Activated CD4-positive, alpha-beta T cell treated with anti-CD3 and anti-CD28 coated beads, Interleukin-2, amount 10 ng/mL, durations not matched to agents 24 days and 14 days (primary cell): ENCODE measurements at regions of chr4 and their contacts with region 1.

Region 1: GRCh38 chr4:25330905-25331808 is 18.6 kb downstream of the ZCCHC4 start:
- DNase-seq: peak; percentile 71
- H3K4me3 Mint-ChIP-seq: peak overlapping the region; percentile 84
- H3K27ac Mint-ChIP-seq: peak overlapping the region; percentile 92
- H3K4me1 Mint-ChIP-seq: peaks cover 17% of the 10 kb centered on the region
- H3K27me3 Mint-ChIP-seq: no peaks in the 10 kb centered on the region

Region 2: DNA sequence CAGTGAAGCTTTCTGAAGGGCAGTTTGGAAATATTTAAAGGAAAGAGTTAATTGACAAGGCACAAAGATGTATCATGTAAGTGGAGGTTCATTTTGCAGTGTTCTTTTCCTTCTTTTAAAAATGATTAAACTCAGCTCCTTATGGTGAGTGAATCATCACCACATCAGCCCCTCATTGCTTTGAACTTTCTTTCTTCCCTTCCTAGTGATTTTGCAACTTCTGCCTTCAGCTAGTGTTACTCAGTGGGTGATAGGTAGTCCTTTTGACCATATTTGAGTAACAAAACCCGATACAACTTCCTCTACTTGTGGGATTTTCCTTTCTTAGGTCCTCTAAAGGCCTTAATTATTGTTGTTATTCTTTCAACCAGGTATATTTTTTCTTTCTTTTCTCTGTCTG is 10.4 kb before region 1 on chr4:
- intact Hi-C with region 1: loop called (anchors 1 kb)
- DNase-seq: no peak
- H3K4me3 Mint-ChIP-seq: peak overlapping the region; percentile 28
- H3K27ac Mint-ChIP-seq: peak overlapping the region; percentile 81
- H3K4me1 Mint-ChIP-seq: peaks cover 23% of the 10 kb centered on the region
- H3K27me3 Mint-ChIP-seq: no peaks in the 10 kb centered on the region

Region 3: DNA sequence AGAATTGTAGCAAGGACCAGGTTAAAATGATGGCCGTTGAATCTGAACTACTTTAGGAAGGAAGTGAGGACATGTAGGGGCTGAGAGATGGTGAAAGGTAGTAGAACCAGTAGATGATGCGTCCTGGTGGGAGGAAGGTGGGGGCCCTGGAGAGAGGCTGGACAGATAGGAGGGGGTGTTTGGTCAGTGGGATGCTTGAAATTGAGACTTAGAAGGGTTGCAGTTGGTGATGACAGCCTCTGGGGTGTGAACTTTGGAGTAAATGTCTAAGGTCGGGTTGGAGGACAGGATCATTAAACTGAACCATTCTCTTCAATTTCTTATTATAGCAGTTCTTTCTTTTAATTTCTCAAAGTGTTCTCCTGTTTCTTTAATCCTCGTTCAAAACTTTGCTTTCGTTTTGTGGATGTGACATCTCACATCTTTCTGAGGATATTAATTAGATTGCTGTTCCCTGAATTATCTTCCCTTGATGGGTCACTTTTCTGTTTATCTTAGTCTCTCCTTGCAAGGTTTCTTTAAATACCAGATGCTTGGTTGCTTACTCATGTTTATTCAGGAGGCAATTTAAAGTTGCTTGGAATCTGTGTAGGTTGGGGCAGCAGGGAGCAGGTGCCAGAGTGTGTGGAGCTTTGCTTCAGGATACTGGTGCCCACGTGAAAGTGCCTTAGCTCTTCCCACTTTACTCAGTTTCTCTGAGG is 69.7 kb after region 1 on chr4:
- intact Hi-C with region 1: no loop called
- DNase-seq: no peak
- H3K4me3 Mint-ChIP-seq: no peak overlapping the region
- H3K27ac Mint-ChIP-seq: no peak overlapping the region
- H3K4me1 Mint-ChIP-seq: peaks cover 4% of the 10 kb centered on the region
- H3K27me3 Mint-ChIP-seq: no peaks in the 10 kb centered on the region